ENCODE measurements at regions of chr11 and their contacts with region 1.

Region 1: DNA sequence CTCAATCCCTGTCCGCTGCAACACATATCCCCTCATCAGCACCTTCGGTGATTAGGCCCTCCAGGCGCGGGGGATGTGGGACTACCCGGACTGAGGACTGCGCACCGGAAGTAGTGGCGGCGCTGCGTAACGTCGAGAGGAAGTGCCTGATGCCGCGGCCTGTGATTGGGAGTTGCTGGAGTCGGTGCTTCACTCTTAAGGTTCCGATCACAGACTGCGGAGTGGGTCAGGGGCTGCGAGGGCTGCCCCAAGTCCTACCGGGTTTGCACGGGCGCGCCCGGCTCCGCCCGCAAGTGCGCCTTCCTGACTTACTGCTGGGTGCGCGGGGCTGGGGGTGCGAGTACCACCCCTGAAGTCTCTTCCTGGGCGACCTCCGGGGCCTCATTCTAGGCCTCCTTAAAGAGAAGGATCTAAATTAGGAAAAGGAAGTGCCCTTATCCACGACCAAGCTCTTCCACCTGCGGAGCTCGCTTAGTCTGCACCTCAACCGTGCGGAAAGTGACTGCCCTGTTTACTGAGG is at the start of gene ALKBH3:
- DNase-seq: peak; percentile 86
- CTCF ChIP-seq: no peak

Region 2: DNA sequence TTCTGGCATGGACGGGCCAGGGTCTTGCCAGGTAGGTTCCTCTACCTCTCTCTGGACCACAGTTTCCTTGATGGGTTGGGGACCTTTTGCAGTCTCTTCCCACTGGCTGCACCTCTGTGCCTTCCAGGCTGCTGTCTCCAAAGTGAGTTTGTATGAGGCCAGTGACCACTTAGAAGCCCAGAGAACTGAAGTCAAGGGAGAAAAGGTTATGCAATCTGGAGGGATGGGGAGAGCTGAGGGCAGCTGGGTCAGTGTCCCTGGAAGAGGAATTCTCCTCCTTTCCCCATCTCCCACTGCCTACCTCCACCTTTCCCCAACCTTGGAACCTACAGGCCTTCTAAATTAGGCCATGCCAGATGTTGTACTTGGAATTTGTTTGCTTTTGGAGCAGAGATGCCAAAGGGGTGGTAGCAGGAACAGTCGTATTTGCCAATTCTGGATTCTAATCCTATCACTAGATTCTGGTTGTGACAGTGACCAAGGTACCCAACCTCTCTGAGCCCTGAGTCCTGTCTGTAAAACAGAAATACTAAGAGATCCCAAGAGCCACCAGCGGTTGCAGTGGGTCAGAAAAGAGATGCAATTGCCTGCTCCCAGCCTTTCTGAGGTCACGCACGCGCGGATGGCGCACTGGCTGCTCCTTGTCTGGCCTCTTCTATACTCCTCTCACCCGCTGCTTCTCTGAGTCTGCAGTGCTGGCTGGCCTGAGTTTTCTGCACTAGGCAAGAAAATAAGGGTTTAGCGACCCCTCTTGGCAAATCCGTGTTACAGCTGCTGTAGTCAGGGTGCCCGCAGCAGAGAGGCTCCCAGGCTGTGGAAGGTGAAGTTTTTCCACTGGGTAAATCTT is 156.3 kb after region 1 on chr11:
- in situ Hi-C with region 1: loop called (anchors 10 kb)
- DNase-seq: peak; percentile 47
- CTCF ChIP-seq: peak; percentile 80

Region 3: GRCh38 chr11:44188643-44189042 is 307.9 kb after region 1 on chr11:
- in situ Hi-C with region 1: no loop called
- DNase-seq: no peak
- CTCF ChIP-seq: no peak